ENCODE measurements at regions of chr14 and their contacts with region 1.

Region 1: GRCh38 chr14:26128931-26129671 is 468.7 kb downstream of the NOVA1 start:
- DNase-seq: no peak

Region 2: GRCh38 chr14:25837428-25838024 is 291.6 kb before region 1 on chr14:
- intact Hi-C with region 1: loop called (anchors 5 kb)
- DNase-seq: peak in 1 of 10 donors; percentile 6

Measured in posterior cingulate gyrus (tissue), 11 donors.